Calu3 (cell line): ENCODE measurements at regions of chr14 and their contacts with region 1.

Region 1: GRCh38 chr14:77028384-77029231 is at the start of gene IRF2BPL:
- DNase-seq: peak; percentile 95
- H3K4me3 Mint-ChIP-seq: peak within 1 kb of the TSS; percentile 75
- H3K27ac Mint-ChIP-seq: peak within 1 kb of the TSS; percentile 91
- H3K4me1 Mint-ChIP-seq: peaks cover 40% of the 10 kb centered on the region
- H3K27me3 Mint-ChIP-seq: no peaks in the 10 kb centered on the region
- CTCF ChIP-seq: no peak
- total RNA-seq, gene IRF2BPL: 30.1 and 33.1 TPM in 2 replicates

Region 2: DNA sequence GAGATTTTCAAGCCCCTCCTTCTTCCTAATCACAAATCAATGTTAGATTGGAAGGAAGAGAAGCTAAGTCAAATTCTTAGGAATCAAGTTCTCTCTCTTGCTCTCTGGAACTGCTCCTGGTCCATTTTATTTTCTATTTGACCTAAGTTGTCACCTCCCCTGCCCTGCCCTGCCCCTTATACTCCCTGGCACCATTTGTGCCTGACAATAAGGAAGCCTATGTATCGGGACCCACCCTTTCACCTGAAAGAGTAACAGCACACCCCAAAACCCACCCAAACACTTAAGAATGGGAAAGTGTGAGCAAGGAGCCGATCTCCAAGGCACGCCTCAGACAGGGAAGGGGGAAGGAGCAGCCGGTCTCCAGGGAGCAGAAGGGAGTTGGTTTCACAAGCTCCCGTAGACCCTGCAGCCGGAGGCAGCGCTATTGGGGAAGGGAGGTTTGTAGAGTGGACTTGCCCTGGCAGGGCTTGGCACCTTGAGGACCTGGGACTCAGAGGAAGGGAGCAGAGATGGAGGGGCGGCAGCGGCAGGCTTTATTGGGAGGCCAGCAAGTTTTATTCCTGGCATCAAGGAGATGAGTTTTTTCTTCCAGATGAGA is 200.8 kb before region 1 on chr14:
- CTCF ChIA-PET with region 1: no interaction called
- intact Hi-C with region 1: no loop called
- DNase-seq: no peak
- H3K4me3 Mint-ChIP-seq: peak overlapping the region; percentile 14
- H3K27ac Mint-ChIP-seq: no peak overlapping the region
- H3K4me1 Mint-ChIP-seq: peaks cover 8% of the 10 kb centered on the region
- H3K27me3 Mint-ChIP-seq: peaks cover 48% of the 10 kb centered on the region
- CTCF ChIP-seq: no peak

Region 3: DNA sequence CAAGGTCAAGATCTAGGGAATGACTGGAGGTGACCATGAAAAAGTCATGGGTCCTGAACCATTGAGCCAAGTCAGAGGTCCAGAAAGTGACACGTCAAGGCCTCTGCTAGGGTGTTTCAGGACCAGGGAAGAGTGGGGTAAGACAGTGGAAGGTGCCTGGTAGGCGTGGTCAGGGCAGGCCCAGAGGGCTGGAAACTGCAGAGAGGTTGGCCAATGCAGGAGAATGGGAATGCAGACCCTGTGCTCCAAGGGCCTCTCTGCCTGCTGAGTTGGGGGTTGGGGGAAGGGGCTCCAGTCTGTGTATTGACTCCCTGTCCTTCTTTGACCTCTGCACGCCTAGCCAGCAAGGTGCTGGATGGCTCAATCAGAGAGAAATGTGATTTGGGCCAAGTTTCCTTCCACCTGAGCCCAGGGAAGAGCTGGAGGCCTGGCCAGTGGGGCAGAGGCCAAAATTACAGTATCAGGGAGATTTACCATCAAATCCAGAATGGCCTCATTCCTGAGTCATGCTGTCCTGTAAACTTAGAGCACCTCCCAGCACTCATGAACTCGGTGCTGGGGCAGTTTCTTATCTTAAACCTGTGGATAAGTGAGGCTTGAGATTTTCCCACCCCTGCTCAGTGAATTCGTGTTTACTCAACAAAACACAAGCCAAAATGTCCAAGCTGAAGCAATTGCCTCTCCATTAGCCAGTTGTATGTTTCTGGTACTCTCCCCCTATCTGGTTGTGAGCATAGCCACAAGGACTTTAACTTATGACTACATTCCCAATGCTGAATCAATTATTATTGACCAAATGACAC is 24.5 kb before region 1 on chr14:
- CTCF ChIA-PET with region 1: interaction called, 3 read pairs
- intact Hi-C with region 1: loop called (anchors 1 kb)
- DNase-seq: peak; percentile 7
- H3K4me3 Mint-ChIP-seq: no peak overlapping the region
- H3K27ac Mint-ChIP-seq: no peak overlapping the region
- H3K4me1 Mint-ChIP-seq: peaks cover 42% of the 10 kb centered on the region
- H3K27me3 Mint-ChIP-seq: no peaks in the 10 kb centered on the region
- CTCF ChIP-seq: no peak